ENCODE measurements at regions of chr12 and their contacts with region 1.

Region 1: DNA sequence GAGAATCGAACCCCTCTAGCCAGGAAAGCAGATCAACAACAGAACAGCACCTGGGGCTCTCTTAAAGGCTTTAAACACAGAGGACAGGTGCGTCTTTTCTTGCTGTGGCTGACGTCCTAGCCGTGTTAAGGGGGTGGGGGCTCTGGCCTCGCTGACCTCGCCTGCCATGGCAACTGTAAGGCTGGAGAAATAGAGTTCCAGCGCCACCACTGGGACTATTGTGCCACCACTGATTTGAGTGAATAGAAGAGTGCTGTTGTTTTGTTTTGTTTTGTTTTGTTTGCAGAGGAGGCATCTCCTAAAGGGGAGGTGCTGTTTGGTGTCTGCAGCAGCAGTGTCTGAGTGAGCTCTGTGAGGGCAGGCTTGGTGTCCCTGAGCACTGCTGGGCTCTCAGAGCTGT is 34.2 kb upstream of the PRMT8 start:
- DNase-seq: no peak
- H3K4me3 Mint-ChIP-seq: no peak overlapping the region
- H3K27ac Mint-ChIP-seq: no peak overlapping the region
- H3K4me1 Mint-ChIP-seq: peaks cover 13% of the 10 kb centered on the region
- H3K27me3 Mint-ChIP-seq: peaks cover 58% of the 10 kb centered on the region
- CTCF ChIP-seq: no peak

Region 2: DNA sequence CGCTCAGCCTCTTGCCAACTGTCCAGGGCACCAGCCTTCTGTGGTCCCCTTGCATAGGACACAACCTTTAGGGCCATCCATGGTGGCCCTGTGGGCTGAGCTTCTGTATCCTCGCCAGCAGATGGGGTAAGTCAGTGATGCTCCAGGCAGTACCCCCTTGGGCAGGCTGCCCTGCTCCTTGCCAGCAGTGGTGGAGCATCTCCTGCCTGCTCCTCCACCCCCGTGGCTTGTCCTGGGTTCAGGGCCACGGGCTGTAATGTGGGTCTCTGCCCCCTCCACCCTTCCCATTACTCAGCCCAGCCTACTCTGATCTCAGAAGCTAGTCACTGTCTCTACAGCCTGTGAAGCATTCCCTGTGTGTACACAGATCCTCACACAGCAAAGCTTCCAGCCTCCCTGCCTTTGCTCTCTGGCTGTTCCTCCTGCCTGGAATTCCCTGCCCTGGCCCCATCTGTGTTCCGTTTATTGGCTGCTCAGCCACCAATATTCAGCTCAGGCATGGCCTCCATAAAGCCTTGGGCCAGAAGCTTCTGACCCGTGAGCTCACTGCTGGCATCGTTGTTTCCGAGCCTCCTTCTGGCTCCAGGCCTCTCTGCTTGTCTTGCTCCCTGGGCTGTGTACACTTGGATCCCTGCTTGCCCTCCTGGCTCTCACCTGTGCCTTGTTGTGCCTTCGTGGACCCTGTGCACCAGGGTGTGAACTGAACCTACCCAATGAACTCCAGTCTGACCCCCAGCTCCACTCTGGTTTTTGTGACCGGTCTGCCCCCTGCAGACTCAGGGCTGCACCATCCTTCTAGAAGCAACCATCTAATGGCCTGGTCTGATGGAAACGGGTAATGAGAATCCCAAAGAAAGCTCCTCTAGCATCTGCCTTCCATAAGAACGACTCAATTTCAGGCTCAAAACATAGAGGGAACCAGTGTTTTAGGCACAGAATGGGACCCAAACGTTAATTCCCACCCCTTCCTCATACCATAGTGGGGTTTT is 142.8 kb before region 1 on chr12:
- CTCF ChIA-PET with region 1: no interaction called
- intact Hi-C with region 1: loop called (anchors 5 kb)
- DNase-seq: peak; percentile 54
- H3K4me3 Mint-ChIP-seq: no peak overlapping the region
- H3K27ac Mint-ChIP-seq: no peak overlapping the region
- H3K4me1 Mint-ChIP-seq: peaks cover 31% of the 10 kb centered on the region
- H3K27me3 Mint-ChIP-seq: peaks cover 18% of the 10 kb centered on the region
- CTCF ChIP-seq: peak; percentile 28

Region 3: DNA sequence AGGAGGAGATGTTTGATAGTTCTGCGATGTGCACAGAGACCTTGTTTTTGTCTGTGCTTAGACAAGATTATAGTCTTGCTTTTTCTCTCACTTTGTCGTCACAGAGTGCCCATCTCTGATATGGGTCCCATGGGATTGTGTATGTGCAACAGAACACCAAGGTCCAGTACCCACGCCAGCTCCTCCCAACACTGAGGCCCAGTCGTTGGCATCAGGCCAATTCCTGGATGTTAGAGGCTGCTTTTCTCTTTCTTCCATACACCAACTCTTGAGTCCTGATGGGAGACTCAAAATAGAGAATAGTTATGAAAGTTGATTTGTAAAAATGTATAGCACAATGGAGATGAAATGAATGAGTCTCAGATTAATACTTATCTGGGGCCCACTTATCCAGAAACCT is 11.5 kb after region 1 on chr12:
- CTCF ChIA-PET with region 1: interaction called, 14 read pairs
- intact Hi-C with region 1: no loop called
- DNase-seq: no peak
- H3K4me3 Mint-ChIP-seq: no peak overlapping the region
- H3K27ac Mint-ChIP-seq: no peak overlapping the region
- H3K4me1 Mint-ChIP-seq: peaks cover 13% of the 10 kb centered on the region
- H3K27me3 Mint-ChIP-seq: peaks cover 62% of the 10 kb centered on the region
- CTCF ChIP-seq: no peak

Region 4: DNA sequence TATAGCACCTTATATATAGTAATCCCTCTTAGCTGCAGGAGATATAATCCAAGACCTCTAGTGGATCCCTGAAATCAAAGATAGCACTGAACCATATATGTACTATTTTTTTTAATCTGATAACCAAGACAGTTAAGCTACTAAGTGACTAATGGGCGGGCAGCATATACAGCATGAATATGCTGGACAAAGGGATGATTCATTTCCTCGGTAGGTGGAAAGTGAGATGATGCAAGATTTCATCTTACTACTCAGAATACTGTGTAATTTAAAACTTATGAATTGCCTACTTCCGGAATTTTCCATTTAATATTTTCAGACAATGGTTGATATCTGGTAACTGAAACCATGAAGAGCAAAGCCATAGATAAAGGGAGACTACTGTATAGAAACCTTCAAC is 70.4 kb after region 1 on chr12:
- CTCF ChIA-PET with region 1: no interaction called
- intact Hi-C with region 1: no loop called
- DNase-seq: no peak
- H3K4me3 Mint-ChIP-seq: no peak overlapping the region
- H3K27ac Mint-ChIP-seq: no peak overlapping the region
- H3K4me1 Mint-ChIP-seq: no peaks in the 10 kb centered on the region
- H3K27me3 Mint-ChIP-seq: peaks cover 20% of the 10 kb centered on the region
- CTCF ChIP-seq: no peak

Region 5: GRCh38 chr12:4056910-4057845 is 600.4 kb after region 1 on chr12:
- CTCF ChIA-PET with region 1: no interaction called
- intact Hi-C with region 1: no loop called
- DNase-seq: no peak
- H3K4me3 Mint-ChIP-seq: no peak overlapping the region
- H3K27ac Mint-ChIP-seq: no peak overlapping the region
- H3K4me1 Mint-ChIP-seq: no peaks in the 10 kb centered on the region
- H3K27me3 Mint-ChIP-seq: peaks cover 86% of the 10 kb centered on the region
- CTCF ChIP-seq: no peak

Measured in Calu3 (cell line).